Caco-2 (cell line): ENCODE measurements at regions of chr12 and their contacts with region 1.

Region 1: GRCh38 chr12:122225683-122226407 is at the start of gene DIABLO:
- DNase-seq: peak; percentile 99 to 100
- H3K4me3 ChIP-seq: peak within 1 kb of the TSS; percentile 80
- H3K4me3 Mint-ChIP-seq: peak within 1 kb of the TSS; percentile 97
- H3K27ac Mint-ChIP-seq: peak within 1 kb of the TSS; percentile 85
- H3K4me1 ChIP-seq: peaks cover 21% of the 10 kb centered on the region
- H3K4me1 Mint-ChIP-seq: peaks cover 19% of the 10 kb centered on the region
- H3K27me3 ChIP-seq: no peaks in the 10 kb centered on the region
- H3K27me3 Mint-ChIP-seq: no peaks in the 10 kb centered on the region
- CTCF ChIP-seq: no peak
- total RNA-seq, gene DIABLO: 76.1 and 86.6 TPM in 2 replicates

Region 2: DNA sequence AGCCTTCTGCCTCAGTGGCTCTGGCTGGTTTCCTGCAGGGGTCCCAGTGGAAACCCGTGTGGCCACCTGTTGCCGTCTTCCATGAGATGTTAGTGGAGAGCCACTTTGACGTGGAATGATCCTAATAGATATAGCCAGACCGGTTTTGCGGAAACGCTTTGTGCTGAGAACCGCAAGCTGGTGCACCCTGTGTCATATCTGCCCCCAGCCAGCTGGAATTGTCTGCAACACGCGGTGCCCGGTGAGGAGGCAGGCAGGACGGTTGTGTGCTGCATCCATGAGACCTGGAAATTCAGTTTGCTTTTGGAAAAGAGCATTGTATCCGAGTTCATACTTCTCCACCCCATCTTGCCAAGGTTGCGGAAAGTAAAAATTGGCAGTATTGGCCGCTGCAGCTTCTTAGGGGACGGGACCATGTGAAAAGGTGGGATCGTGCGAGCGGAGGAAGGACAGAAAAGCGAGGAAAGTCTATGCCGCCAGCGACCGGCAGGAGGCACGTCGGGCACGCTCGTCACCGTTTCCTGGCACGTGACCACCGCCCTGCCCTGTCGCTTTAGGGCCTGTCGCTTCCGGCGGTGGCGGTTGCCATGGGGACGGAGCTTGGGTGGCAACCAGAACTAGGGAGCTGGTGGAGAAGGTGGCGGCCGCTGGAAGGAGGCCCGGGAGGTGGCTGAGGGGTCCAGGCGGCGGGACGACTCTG is 307.7 kb before region 1 on chr12 and contains the start of gene CFAP251:
- CTCF ChIA-PET with region 1: no interaction called
- POLR2A ChIA-PET with region 1: no interaction called
- intact Hi-C with region 1: no loop called
- DNase-seq: peak; percentile 75 to 82
- H3K4me3 ChIP-seq: peak within 1 kb of the TSS; percentile 26
- H3K4me3 Mint-ChIP-seq: peak within 1 kb of the TSS; percentile 54
- H3K27ac Mint-ChIP-seq: no peak within 1 kb of the TSS
- H3K4me1 ChIP-seq: no peaks in the 10 kb centered on the region
- H3K4me1 Mint-ChIP-seq: no peaks in the 10 kb centered on the region
- H3K27me3 ChIP-seq: no peaks in the 10 kb centered on the region
- H3K27me3 Mint-ChIP-seq: no peaks in the 10 kb centered on the region
- CTCF ChIP-seq: no peak
- total RNA-seq, gene CFAP251: 1.2 and 1.5 TPM in 2 replicates

Region 3: DNA sequence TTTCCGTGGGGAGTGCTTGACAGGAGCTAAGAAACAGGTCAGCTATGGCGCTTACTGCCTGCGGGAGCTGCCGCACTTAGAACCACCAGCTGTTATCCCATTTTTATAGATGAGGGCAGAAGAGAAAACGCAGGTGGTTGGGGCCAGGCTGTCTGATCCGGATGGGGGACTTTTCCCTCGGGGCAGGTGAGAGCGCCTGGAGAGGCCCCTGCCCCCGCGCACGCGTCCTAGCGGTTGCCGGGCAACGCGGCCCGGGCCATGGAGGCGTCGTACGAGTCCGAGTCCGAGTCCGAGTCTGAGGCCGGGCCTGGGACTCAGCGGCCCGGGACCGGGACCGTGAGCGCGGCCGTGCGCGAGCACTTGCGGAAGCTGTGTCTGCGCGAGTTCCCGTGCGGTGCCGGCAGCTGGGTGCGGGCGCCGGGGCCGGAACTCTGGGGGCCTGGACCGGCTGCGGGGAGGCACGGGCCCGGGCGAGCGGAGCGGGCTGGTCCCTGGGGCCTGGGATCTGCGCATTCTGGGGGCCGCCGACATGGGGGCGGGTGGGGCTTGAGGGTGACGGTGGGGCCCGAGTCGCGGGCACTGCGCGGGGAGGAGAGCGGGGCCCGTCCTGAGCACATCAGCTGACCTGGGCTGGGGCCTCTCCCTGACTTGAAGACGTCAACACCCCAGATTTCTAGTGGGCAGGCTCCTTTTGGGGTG is 42.8 kb before region 1 on chr12 and contains the start of gene LRRC43:
- CTCF ChIA-PET with region 1: no interaction called
- POLR2A ChIA-PET with region 1: no interaction called
- intact Hi-C with region 1: no loop called
- DNase-seq: peak in 1 of 2 experiments; percentile 69
- H3K4me3 ChIP-seq: peak within 1 kb of the TSS; percentile 43
- H3K4me3 Mint-ChIP-seq: peak within 1 kb of the TSS; percentile 69
- H3K27ac Mint-ChIP-seq: no peak within 1 kb of the TSS
- H3K4me1 ChIP-seq: no peaks in the 10 kb centered on the region
- H3K4me1 Mint-ChIP-seq: no peaks in the 10 kb centered on the region
- H3K27me3 ChIP-seq: no peaks in the 10 kb centered on the region
- H3K27me3 Mint-ChIP-seq: no peaks in the 10 kb centered on the region
- CTCF ChIP-seq: no peak
- total RNA-seq, gene LRRC43: 0.34 TPM in 1 of 2 replicates, not detected in the other

Region 4: DNA sequence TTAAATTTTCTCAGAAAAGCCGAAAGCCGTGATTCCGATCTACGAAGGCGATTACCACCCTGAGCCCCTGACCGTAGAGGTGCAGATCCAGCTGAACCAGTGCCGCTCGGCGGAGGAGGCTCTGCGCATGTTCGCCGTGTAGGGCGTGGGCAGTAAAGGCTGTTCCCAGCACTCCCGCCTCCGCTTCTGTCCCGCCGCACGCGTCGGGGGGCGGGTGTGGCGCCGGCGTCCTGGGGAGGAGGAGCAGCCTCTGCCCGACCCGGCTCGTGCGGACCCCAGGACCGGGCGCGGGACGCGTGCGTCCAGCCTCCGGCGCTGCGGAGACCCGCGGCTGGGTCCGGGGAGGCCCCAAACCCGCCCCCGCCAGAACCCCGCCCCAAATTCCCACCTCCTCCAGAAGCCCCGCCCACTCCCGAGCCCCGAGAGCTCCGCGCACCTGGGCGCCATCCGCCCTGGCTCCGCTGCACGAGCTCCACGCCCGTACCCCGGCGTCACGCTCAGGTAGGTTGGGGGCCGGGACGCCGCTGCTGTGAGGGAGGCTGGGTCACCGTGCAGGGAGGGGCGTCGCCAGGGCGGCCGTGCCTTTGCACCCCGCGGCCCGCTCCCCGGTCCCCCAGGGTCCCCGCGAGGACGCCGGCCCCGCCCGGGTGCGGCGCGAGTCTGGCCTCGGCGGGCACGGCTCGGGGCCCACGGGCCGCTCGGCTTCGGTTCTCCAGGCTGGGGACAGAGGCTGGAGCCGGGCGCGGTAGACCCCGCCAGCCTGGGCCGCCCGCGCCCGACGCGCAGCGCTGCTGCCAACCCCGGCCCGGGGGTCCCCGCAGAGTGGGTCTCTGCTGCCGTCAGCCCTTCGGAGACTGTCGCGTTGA is 22.3 kb before region 1 on chr12 and contains the start of gene B3GNT4:
- CTCF ChIA-PET with region 1: interaction called, 4 read pairs
- POLR2A ChIA-PET with region 1: interaction called, 3 read pairs
- intact Hi-C with region 1: loop called (anchors 2 kb)
- DNase-seq: peak; percentile 81 to 82
- H3K4me3 ChIP-seq: peak within 1 kb of the TSS; percentile 67
- H3K4me3 Mint-ChIP-seq: peak within 1 kb of the TSS; percentile 64
- H3K27ac Mint-ChIP-seq: peak within 1 kb of the TSS; percentile 42
- H3K4me1 ChIP-seq: peaks cover 9% of the 10 kb centered on the region; the same call in 1 of the 2 replicates
- H3K4me1 Mint-ChIP-seq: peaks cover 7% of the 10 kb centered on the region
- H3K27me3 ChIP-seq: no peaks in the 10 kb centered on the region
- H3K27me3 Mint-ChIP-seq: no peaks in the 10 kb centered on the region
- CTCF ChIP-seq: no peak
- total RNA-seq, gene B3GNT4: 2.2 and 3.8 TPM in 2 replicates

Region 5: DNA sequence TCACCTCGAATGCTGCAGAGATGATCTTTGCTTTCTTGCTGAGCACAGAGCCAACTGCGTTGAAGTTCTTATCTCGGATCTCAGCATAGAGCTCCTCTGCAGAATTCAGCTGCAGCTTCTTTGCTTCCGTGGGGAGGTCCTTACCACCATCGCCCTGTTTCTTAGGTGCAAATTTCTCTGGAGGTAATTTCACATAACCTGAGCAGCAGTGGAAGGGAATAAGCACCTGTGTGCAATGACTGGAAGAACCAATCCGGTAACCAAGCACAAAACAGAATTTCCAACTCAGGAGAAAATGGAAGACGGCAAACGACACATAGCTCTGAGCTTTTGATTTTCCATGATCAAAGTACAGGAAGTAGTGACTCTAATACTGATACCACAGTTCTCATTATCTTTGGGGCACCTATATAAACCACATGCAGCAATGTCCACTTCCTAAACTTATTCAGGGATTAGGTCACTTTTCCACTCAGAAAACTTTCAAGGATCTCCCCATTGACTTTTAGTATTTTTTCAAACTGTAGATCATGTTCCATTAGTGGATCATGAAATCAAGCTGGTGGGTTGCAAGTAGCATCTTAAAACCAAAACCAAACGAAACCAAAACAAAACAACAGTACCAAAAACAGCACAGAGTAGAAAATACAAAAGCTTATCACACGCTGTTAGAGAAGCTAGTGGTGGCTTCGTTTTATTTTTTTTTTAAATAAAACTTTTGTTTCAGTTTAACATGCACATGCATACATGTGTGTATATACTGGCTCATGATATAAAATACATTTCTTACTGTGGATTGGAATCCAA is 18.9 kb after region 1 on chr12:
- CTCF ChIA-PET with region 1: no interaction called
- POLR2A ChIA-PET with region 1: interaction called, 10 read pairs
- intact Hi-C with region 1: no loop called
- DNase-seq: no peak
- H3K4me3 ChIP-seq: no peak overlapping the region
- H3K4me3 Mint-ChIP-seq: no peak overlapping the region
- H3K27ac Mint-ChIP-seq: no peak overlapping the region
- H3K4me1 ChIP-seq: no peaks in the 10 kb centered on the region
- H3K4me1 Mint-ChIP-seq: no peaks in the 10 kb centered on the region
- H3K27me3 ChIP-seq: no peaks in the 10 kb centered on the region
- H3K27me3 Mint-ChIP-seq: no peaks in the 10 kb centered on the region
- CTCF ChIP-seq: no peak

Region 6: DNA sequence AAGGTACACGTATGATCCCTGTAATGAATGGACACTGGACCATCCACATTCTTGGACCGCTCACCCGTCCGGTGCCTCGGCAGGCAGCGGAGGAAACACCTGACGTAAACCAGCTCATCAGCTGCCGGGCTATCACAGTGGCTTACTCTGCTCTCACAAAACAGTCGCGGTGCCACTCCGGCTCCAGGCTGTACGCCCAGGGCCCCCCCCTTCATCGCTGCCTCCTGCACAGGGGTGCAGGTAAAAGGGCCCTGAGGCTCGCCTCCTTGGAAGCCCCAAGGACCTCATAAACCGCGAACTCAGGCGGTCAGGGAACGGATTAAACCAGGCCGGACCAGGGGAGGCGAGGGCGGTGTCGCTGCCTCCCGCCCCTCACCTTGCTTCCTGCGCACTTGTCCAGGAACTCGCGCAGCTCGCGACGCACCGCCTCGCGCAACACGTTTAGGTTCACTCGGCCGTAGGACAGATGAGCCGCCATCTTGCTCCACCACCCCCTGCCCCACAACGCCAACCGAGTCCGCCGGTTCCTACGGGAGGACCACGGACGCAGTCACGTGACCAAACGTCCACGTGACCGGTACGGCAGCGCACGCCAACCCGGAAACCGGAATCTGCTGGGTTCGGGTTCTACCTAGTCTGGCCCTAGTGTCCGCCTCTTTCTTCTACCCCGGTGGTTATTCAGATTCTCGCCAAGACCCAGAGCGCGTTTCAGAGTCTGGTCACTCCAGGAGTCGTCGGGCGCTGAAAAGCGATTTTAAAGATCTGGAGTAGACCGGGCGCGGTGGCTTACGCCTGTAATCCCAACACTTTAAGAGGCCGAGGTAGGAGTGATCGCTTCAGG is 40.3 kb after region 1 on chr12 and contains the start of gene VPS33A:
- CTCF ChIA-PET with region 1: interaction called, 3 read pairs
- POLR2A ChIA-PET with region 1: interaction called, 6 read pairs
- intact Hi-C with region 1: loop called (anchors 1 kb)
- DNase-seq: peak; percentile 97 to 99
- H3K4me3 ChIP-seq: peak within 1 kb of the TSS; percentile 65
- H3K4me3 Mint-ChIP-seq: peak within 1 kb of the TSS; percentile 83
- H3K27ac Mint-ChIP-seq: peak within 1 kb of the TSS; percentile 96
- H3K4me1 ChIP-seq: no peaks in the 10 kb centered on the region
- H3K4me1 Mint-ChIP-seq: no peaks in the 10 kb centered on the region
- H3K27me3 ChIP-seq: no peaks in the 10 kb centered on the region
- H3K27me3 Mint-ChIP-seq: no peaks in the 10 kb centered on the region
- CTCF ChIP-seq: no peak
- total RNA-seq, gene VPS33A: 34.9 and 36.5 TPM in 2 replicates

Region 7: DNA sequence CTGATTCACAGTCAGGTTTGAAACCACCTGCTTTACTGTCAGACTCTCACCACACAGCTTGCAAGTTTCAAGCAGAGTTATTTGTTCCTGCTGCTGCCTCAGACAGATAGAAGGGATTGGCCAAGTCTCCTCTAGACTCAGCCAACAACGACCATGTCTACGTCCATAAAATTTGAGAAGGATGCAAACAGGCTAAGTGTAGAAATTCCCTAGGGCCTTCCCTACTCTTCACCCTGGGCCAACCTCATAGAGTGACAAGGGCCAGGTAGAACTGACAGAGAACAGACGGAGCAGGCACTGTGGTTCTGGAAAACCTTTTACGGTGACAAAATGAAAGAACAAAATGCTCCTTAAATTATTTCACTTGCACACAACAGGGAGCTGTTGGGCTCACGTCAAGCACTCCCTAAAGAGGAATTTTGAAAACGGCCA is 157.1 kb after region 1 on chr12:
- CTCF ChIA-PET with region 1: no interaction called
- POLR2A ChIA-PET with region 1: no interaction called
- intact Hi-C with region 1: no loop called
- DNase-seq: no peak
- H3K4me3 ChIP-seq: no peak overlapping the region
- H3K4me3 Mint-ChIP-seq: no peak overlapping the region
- H3K27ac Mint-ChIP-seq: no peak overlapping the region
- H3K4me1 ChIP-seq: no peaks in the 10 kb centered on the region
- H3K4me1 Mint-ChIP-seq: no peaks in the 10 kb centered on the region
- H3K27me3 ChIP-seq: no peaks in the 10 kb centered on the region
- H3K27me3 Mint-ChIP-seq: no peaks in the 10 kb centered on the region
- CTCF ChIP-seq: no peak